ENCODE measurements at regions of chr12 and their contacts with region 1.

Region 1: GRCh38 chr12:80946594-80946993 is 8.9 kb upstream of the LIN7A start:
- DNase-seq: no peak
- ATAC-seq: no peak

Region 2: GRCh38 chr12:80472902-80473500 is 473.6 kb before region 1 on chr12:
- intact Hi-C with region 1: loop called (anchors 10 kb)
- DNase-seq: no peak
- ATAC-seq: no peak

Region 3: DNA sequence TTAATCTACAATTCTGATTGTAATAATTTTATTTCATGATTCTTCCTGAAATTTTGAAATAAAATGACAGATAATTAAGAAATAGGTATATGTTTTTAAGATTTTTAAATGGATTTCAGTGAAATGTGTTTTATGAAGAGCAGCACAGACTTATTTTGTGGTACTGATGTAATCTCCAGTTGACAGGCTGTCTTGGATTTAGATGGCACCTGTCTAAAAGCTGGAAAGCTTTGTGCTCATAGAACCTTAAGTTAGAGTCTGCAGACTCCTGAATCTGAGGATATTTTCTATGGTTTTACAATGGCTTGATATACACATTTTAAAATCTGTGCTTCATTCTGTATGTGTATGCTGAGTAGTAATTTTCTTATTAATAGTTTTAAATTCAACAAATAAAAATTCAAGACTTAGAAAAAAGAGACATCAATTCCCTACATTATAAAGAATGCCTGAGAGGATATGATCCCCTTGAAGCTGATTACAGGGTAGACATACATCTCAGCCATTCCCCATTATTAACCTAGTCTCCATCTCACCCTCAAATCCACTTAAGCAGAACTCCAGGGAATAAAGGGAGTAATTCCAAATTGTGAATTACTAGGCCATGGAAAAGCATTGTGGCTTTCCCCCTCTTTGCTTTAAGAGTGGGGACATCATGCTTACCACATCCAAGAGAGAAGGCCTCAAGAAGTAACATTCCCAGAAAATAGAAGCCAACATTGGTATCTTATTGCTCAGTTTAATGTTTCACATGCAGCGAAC is 97.6 kb after region 1 on chr12:
- intact Hi-C with region 1: no loop called
- DNase-seq: no peak
- ATAC-seq: no peak